Activated CD4-positive, alpha-beta T cell treated with anti-CD3 and anti-CD28 coated beads for 36 hours (primary cell): ENCODE measurements at regions of chr18 and their contacts with region 1.

Region 1: GRCh38 chr18:77054606-77055428 is 77.8 kb downstream of the MBP start:
- DNase-seq: peak; percentile 90
- ATAC-seq: peak; percentile 82
- H3K4me3 Mint-ChIP-seq: peak overlapping the region; percentile 69
- H3K27ac Mint-ChIP-seq: peak overlapping the region; percentile 100
- H3K4me1 Mint-ChIP-seq: peaks cover 69% of the 10 kb centered on the region
- H3K27me3 Mint-ChIP-seq: no peaks in the 10 kb centered on the region

Region 2: DNA sequence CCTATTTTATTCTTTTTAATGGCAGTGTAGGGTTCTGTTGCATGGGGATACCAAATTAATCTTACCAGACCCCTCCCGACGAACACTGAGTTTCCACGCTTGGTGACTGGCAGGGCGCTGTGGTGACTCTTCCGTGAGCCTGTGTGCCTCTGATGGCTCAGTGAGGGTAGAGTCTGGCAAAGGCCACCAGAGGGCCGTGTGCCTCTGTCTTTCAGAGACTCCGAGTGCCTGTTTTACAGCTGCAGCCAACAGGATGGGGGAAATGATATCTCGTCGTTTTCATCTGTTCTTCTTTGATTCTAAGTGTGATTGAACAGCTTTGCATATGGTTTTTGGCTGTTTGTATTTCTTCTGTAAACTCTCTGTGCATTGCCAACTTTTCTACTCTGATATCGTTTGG is 132.7 kb before region 1 on chr18:
- CTCF ChIA-PET with region 1: interaction called, 3 read pairs
- POLR2A ChIA-PET with region 1: no interaction called
- intact Hi-C with region 1: loop called in 1 of 2 experiments (anchors 2 kb)
- DNase-seq: peak; percentile 71
- ATAC-seq: peak; percentile 97
- H3K4me3 Mint-ChIP-seq: no peak overlapping the region
- H3K27ac Mint-ChIP-seq: no peak overlapping the region
- H3K4me1 Mint-ChIP-seq: peaks cover 15% of the 10 kb centered on the region
- H3K27me3 Mint-ChIP-seq: no peaks in the 10 kb centered on the region

Region 3: GRCh38 chr18:77067291-77068061 is 12.7 kb after region 1 on chr18:
- CTCF ChIA-PET with region 1: interaction called, 42 read pairs
- POLR2A ChIA-PET with region 1: interaction called, 20 read pairs
- intact Hi-C with region 1: loop called (anchors 1 to 2 kb)
- DNase-seq: peak; percentile 85
- ATAC-seq: peak; percentile 50
- H3K4me3 Mint-ChIP-seq: peak overlapping the region; percentile 48
- H3K27ac Mint-ChIP-seq: peak overlapping the region; percentile 94
- H3K4me1 Mint-ChIP-seq: peaks cover 100% of the 10 kb centered on the region
- H3K27me3 Mint-ChIP-seq: no peaks in the 10 kb centered on the region

Region 4: GRCh38 chr18:77223653-77224052 is 168.8 kb after region 1 on chr18:
- CTCF ChIA-PET with region 1: interaction called, 3 read pairs
- POLR2A ChIA-PET with region 1: no interaction called
- intact Hi-C with region 1: loop called in 1 of 2 experiments (anchors 5 kb)
- DNase-seq: no peak
- ATAC-seq: peak; percentile 70
- H3K4me3 Mint-ChIP-seq: no peak overlapping the region
- H3K27ac Mint-ChIP-seq: no peak overlapping the region
- H3K4me1 Mint-ChIP-seq: peaks cover 15% of the 10 kb centered on the region
- H3K27me3 Mint-ChIP-seq: peaks cover 12% of the 10 kb centered on the region